Cardiac septum (tissue), 1 donor: ENCODE measurements at regions of chr1 and their contacts with region 1.

Region 1: GRCh38 chr1:19974822-19975416 is 4.5 kb downstream of the PLA2G2A start:
- DNase-seq: no peak

Region 2: GRCh38 chr1:19872190-19872589 is 102.7 kb before region 1 on chr1:
- intact Hi-C with region 1: no loop called
- DNase-seq: no peak

Region 3: DNA sequence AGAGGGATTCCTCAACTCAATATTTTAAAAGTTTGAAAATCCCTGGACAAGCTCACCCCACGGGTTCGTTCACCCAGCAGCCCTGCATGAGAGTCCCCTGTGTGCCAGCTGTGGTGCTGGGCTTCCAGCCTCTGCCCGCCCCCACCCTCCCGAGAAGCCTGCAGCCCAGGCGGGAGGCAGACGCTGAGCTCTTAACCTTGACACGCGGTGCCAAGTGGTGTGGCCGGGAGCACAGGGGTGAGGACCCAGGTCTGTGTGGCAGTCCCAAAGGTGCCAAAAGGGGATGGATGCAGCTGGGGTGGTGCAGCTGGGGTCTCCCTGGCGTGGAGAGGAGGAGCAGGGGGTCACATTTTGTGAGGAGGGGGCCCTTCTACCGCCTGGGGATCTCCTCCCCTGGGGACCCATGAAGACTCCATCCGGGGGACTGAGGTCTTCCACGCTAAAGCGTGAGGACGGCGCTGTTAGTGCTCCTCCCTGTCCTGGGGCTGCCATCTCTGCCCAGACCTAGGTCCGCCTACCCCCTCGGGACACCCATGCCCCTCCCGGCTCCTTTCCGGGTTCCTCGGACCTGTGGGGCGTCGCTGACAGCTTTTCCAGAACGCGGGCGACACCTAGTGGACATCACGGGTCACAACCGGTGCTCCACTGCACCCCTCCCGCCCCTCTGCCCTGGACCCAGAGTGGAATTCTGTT is 177.1 kb after region 1 on chr1:
- intact Hi-C with region 1: loop called (anchors 2 kb)
- DNase-seq: peak; percentile 89